ENCODE measurements at regions of chr17 and their contacts with region 1.

Region 1: DNA sequence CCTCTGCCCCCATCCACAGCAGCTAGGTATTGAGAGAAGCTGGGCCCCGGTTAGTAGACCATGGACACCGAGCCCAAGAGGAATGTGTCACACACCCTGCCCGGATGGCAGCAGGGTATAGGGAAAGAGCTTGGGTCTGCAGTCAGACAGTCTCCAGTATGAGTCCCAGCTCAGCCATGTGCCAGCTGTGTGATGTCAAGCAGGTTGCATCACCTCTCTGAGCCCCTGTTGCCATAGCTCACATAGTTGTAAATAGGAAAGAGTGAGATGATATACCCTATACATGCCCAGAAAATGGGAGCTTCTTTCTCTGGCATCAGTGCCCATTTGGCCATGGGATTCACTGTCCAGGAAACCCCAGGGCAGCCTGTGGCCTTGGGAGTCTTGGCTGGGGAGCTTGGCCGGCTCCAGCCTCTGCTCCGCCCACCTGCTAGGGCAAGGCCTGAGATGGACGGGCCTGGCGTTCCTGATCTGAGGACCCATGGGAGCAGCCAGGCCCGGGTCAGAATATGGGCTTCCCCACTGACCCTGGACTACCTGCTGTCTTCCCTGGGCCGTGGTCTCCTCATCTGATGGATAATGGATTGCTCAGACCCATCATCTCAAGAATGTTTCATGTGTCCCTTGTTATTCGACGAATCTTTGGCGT is 13.2 kb downstream of the CD300LG start:
- DNase-seq: no peak
- ATAC-seq: 0 out of 2 replicates have a peak, but pooled peaks have one; percentile 21
- H3K4me3 ChIP-seq: no peak overlapping the region
- H3K27ac ChIP-seq: no peak overlapping the region
- H3K4me1 ChIP-seq: no peaks in the 10 kb centered on the region
- H3K27me3 ChIP-seq: peaks cover 89% of the 10 kb centered on the region
- CTCF ChIP-seq: no peak
- POLR2A ChIP-seq: no peak
- RAD21 ChIP-seq: no peak

Region 2: GRCh38 chr17:43871951-43872695 is 11.9 kb after region 1 on chr17:
- CTCF ChIA-PET with region 1: no interaction called
- POLR2A ChIA-PET with region 1: interaction called, 15 read pairs
- dilution Hi-C with region 1: no loop called
- in situ Hi-C with region 1: no loop called
- intact Hi-C with region 1: no loop called
- DNase-seq: no peak
- ATAC-seq: no peak
- H3K4me3 ChIP-seq: no peak overlapping the region
- H3K27ac ChIP-seq: no peak overlapping the region
- H3K4me1 ChIP-seq: no peaks in the 10 kb centered on the region
- H3K27me3 ChIP-seq: peaks cover 45% of the 10 kb centered on the region
- CTCF ChIP-seq: no peak
- POLR2A ChIP-seq: no peak
- RAD21 ChIP-seq: no peak

Measured in IMR-90 (cell line).